Sciatic nerve (tissue), 2 donors: ENCODE measurements at regions of chr10 and their contacts with region 1.

Region 1: GRCh38 chr10:59625721-59626522 is 83.7 kb downstream of the SLC16A9 start:
- DNase-seq: no peak
- ATAC-seq: peak; percentile 79

Region 2: DNA sequence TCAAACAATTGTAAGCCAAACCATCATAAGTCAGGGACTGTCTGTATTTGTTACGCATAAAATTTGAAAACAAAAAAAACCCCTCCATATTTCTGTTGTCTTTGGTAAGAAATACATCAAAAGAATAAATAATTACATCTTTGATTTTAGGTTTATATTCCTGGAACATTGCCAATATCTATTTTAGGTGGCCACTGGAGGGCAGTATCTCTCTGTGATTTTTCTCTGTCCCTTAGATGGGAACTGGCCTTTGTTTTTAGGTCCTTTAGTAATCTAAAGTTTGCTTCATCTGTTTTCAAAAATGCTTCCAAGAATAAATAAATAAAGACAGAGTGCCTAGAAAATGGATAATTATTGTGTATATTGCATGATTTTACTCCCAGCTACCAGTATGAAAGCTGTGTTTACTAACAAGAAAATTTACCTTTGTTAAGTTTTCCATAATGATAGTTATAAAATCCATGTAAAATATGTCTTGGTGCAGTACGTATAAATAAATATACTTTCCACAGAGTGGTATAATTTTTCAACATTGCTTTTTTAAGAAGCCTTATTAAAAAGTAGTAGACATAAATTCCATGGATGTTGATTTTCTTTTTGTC is 385.2 kb before region 1 on chr10:
- intact Hi-C with region 1: loop called (anchors 5 kb)
- DNase-seq: no peak
- ATAC-seq: no peak

Region 3: DNA sequence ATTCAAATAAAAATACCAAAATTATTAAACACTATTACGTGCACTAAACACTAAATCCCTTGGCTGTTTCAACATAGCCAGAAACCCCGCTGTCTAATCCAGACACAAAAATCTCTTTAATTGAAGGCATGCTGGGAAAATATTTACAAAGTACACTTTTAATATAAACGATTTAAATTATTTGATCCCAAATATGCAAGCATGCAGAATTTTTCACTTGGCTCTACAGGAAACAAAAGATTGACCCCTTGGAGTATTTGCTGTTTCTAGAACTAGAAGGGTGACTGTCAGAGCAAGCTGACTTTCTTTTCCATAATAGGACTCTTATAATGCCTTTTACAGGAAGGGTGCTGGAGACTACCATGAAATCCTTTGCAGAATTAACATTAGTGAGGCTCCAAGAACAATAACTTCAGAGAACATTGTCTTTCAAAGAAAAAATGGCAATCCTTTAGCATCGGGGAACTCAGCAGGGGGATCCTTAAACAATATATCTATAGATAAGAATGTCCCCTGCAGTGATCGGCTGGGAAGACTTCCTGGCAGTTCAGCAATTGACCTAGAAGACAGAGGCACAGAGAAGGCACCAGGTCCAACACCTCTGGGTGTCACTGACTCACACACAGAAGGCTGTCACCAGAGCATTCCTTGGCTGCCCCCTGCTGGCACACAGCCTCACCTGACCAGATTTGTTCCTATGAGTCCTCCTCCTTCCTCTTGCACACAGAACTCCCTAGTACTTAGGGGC is 183.1 kb after region 1 on chr10:
- intact Hi-C with region 1: loop called (anchors 10 kb)
- DNase-seq: peak; percentile 80
- ATAC-seq: peak; percentile 70

Region 4: DNA sequence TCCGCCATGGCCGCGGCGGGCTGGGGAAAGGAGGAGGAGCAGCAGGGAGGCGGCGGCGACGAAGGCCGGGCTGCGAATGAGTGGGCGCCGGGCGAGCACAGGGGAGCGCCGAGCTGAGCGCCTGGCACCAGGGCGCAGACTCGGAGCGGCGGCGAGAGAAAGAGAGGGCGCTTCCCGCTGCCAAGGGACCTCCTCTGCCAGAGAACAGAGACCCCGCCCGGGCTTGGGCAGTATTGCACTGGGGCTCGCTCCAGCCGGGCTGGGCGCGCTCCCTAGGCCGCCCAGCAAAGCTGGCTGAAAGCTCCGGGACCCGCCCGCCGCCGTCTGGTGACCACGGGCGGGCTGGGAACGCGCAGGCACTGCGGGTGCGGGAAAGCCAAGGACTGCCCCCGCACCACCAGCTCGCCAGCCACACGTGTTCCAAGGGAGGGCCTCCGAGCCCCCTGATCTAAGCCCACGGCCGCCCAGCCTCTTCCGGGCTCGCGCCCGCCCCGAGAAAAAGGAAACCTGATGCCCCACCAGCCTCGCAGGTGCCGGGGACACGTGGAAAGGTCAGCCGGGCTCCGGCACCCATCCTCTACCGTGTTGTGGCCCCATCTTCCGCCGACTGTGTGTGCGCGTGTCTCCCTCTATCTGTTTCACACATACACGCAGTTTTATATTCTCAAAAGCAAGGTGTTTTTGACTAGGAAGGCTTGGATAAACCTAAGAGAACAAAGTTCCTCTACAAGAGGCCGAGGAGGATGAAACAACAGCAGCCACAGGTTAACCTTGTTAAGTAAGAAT is 280.7 kb after region 1 on chr10 and contains the start of gene CCDC6:
- intact Hi-C with region 1: loop called (anchors 10 kb)
- DNase-seq: peak; percentile 94
- ATAC-seq: peak; percentile 95
- total RNA-seq, gene CCDC6: 36.2 TPM